ENCODE measurements at regions of chr15 and their contacts with region 1.

Region 1: DNA sequence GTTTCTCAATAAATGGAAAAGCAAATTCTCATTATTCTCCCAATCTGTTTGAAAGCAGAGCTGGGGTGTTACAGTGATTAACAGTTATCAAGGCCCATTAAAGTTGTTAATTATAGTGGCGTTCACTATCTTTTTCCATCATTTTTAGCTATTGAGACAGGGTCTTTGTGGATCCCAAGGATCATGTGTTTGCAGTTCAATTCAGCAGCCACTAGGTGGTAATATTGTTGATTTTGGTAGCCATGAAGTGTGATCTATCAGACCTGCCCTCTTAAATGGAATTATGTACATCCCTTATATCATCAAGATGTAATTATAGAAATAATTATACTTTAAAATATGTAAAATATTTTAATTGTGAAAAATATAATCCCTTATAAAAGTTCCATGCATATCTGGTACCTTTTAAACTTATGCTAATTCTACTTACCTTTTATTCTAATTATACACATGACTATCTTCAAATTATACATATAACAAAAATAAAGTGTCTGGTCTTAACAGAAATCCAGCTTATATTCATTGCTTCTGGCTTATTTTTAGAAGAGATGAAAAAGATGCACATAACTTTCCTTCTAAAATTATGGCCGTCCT is 126.4 kb downstream of the GREM1 start:
- DNase-seq: no peak

Region 2: GRCh38 chr15:31598620-31599019 is 1245.6 kb before region 1 on chr15:
- intact Hi-C with region 1: no loop called
- DNase-seq: no peak

Region 3: DNA sequence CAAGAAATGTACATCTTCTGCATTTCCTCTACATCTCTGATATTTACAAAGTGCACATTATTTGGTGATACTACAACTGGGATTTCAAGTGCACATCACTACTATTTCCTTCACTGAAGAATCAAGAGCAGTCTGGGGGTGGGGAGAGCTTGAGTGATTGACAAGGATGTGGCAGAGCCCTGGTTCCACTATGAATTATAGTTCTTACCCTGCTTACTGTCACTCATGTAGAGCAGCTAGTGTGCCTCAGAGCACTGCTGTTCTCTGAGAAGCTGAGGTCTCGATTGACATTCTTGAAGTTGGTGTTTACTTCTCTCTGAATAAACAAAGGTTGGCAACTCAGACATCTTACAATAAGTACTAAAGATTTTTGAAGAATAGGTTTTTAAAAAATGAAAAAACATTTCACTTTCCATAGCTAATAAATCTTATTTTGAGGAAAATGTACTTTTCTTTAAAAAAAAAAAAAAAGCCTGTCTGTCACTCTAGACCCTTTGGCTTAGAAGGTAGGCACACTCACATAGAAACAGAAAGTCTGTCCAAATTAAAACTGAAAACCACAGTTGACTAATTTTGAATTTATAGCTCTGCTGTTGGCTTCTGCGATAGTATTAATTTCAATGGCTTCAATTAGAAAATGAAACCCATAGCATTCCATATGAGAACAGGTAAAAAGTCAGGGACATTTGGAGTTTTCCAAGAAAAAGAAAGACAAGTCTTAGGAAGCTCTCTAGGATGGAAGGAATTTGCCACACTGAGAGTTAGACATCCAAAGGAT is 120.9 kb before region 1 on chr15:
- intact Hi-C with region 1: loop called (anchors 5 kb)
- DNase-seq: no peak

Region 4: GRCh38 chr15:32828507-32829186 is 15.6 kb before region 1 on chr15:
- intact Hi-C with region 1: loop called (anchors 2 kb)
- DNase-seq: no peak

Region 5: DNA sequence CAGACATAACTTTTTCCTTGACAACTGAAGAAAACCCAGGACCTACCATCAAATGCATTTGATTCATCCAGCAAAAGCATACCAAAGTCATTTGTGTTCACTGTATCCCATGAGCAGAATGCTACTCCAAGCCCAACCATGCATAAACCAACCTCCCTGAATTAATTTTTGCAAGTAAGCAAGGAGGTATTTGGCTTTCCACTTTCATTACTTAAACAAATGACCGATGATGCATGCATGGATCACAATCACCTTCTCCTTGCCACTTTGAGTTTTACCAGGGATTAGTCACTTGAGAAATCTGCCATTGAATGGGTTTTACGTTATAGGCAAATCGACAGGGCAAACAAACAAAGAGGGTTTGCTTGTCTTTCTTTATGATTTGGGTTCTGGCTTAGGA is 135.5 kb after region 1 on chr15:
- intact Hi-C with region 1: no loop called
- DNase-seq: no peak